ENCODE measurements at regions of chr1 and their contacts with region 1.

Region 1: DNA sequence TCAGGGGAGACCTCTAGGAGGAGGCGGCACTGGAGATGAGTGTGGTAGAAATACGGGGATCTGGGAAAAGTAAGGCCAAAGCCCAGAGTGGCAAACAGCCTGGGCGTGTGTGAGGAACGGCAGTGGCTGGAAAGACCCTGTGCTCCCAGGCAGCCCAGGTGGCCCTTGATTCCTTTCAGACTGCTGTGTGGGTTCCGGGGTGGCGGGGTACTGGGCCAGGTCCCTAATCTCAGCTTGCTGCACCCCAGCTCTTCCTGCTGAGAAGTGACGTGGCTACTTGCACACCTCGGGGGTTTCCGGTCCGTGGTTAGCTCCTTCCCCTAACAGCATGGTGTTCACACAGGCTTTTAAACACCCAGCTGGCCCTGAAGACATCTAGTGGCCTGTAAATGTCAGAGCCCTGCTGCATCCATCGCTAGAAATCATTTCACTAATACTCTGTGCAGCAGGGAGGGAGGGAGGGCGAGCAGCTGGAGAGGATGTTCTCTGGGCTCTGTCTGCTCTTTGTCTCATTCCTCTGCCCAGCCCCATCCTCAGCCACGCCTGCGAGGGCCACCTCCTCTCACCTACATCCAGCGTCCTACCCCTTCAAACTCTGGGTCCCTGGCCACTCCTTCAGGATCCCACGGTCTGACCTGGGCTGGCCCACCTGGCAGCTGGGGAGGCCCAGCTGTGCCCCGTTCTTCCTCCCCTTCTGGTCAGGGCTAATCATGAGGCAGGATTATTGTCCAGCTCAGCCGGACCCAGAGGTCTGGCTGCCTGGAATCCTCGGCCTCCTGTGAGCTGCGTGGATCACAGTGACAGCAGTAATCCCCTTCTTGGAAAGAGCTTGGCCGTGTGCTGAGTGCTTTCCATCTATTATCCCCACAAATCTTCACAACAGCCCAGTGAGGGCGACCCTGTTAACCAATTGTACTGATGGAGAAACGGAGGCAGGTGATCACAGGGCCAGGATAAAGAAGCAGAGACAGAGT is 7.2 kb downstream of the ZDHHC18 start:
- DNase-seq: peak; percentile 96
- H3K4me3 Mint-ChIP-seq: peak overlapping the region; percentile 57
- H3K27ac Mint-ChIP-seq: peak overlapping the region; percentile 96
- H3K4me1 Mint-ChIP-seq: peaks cover 59% of the 10 kb centered on the region
- H3K27me3 Mint-ChIP-seq: no peaks in the 10 kb centered on the region

Region 2: DNA sequence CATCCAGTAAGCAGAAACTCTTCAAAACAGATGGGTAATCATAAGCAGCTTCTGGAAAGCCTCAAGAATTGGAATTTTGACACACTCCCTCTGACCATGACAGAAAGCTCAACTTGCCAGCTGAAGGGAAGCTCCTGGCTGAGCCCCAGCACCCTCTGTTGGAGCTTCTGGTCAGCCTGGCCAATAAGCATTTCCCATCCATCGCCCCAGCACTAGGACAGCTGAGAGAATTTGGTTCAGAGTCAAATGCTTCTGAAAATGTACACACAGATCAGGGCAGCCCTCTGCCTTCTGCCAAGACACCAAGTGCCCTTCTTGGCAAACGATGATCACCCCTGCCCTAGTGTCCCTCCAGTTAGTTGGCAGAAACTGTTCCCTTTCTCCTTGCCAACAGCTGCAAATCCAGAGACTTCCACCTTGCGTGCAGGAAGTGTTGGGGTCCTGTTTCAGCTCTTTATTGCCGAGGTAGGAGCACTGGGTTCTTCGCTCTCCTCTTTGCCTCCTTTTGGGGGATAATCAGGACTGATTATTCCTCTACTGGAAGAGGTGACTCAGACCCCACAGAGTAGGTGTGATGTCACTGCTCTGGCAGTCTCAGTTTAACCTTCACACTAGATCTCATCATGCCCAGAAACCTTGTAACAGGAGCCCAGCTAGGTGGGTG is 34.1 kb before region 1 on chr1:
- CTCF ChIA-PET with region 1: interaction called, 13 read pairs
- intact Hi-C with region 1: no loop called
- DNase-seq: peak; percentile 46
- H3K4me3 Mint-ChIP-seq: no peak overlapping the region
- H3K27ac Mint-ChIP-seq: peak overlapping the region; percentile 64
- H3K4me1 Mint-ChIP-seq: peaks cover 33% of the 10 kb centered on the region
- H3K27me3 Mint-ChIP-seq: no peaks in the 10 kb centered on the region

Region 3: GRCh38 chr1:26820784-26821269 is 12.9 kb before region 1 on chr1:
- CTCF ChIA-PET with region 1: interaction called, 26 read pairs
- intact Hi-C with region 1: no loop called
- DNase-seq: peak; percentile 47
- H3K4me3 Mint-ChIP-seq: peak overlapping the region; percentile 52
- H3K27ac Mint-ChIP-seq: peak overlapping the region; percentile 51
- H3K4me1 Mint-ChIP-seq: peaks cover 21% of the 10 kb centered on the region
- H3K27me3 Mint-ChIP-seq: no peaks in the 10 kb centered on the region